Ovary (tissue), 10 donors: ENCODE measurements at regions of chr12 and their contacts with region 1.

Region 1: DNA sequence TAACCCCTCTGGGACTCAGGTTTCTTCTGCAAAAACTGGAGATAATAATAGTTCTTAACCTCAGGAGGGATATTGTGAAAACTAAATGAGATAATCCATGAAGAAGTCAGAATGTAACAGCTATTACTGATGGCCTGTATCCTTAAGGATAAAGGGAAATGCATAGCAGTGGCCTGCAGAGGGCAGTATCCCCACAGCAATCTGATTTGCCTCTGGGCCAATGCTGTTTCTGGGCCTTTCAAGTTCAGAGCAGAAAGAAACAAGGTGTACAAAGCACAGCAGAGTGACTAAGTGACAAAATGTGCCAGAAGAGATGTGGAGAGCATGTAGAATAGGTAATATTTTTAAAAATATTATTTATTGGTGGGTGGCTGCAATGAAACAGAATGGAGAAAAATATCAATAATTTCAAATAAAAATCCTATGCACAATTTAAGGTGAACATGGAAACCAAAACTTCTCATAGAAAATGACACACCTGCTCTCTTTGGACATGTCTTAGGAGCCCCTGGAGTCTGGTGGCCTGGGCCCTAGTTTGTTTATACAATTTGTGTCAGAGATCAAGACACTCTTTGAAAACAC is 90.3 kb downstream of the C12orf75 start:
- DNase-seq: peak; percentile 62 to 80 (median 74)
- H3K4me3 ChIP-seq: no peak overlapping the region
- H3K27ac ChIP-seq: no peak overlapping the region
- H3K4me1 ChIP-seq: no peaks in the 10 kb centered on the region
- H3K27me3 ChIP-seq: no peaks in the 10 kb centered on the region
- CTCF ChIP-seq: peak; percentile 69 to 84 (median 75)
- EP300 ChIP-seq: no peak
- POLR2A ChIP-seq: no peak

Region 2: GRCh38 chr12:105013892-105014291 is 406.9 kb before region 1 on chr12:
- intact Hi-C with region 1: no loop called
- DNase-seq: no peak
- H3K4me3 ChIP-seq: no peak overlapping the region
- H3K27ac ChIP-seq: no peak overlapping the region
- H3K4me1 ChIP-seq: no peaks in the 10 kb centered on the region
- H3K27me3 ChIP-seq: no peaks in the 10 kb centered on the region
- CTCF ChIP-seq: no peak
- EP300 ChIP-seq: no peak
- POLR2A ChIP-seq: no peak

Region 3: GRCh38 chr12:106282457-106283097 is 861.8 kb after region 1 on chr12:
- intact Hi-C with region 1: loop called in 1 of 4 experiments (anchors 10 kb)
- DNase-seq: peak in 4 of 5 donors; percentile 28 to 60 (median 42)
- H3K4me3 ChIP-seq: no peak overlapping the region
- H3K27ac ChIP-seq: no peak overlapping the region
- H3K4me1 ChIP-seq: no peaks in the 10 kb centered on the region
- H3K27me3 ChIP-seq: no peaks in the 10 kb centered on the region
- CTCF ChIP-seq: peak; percentile 64 to 73 (median 66)
- EP300 ChIP-seq: no peak
- POLR2A ChIP-seq: no peak